ENCODE measurements at regions of chrX and their contacts with region 1.

Region 1: GRCh38 chrX:349196-349595 is 30.6 kb upstream of the GTPBP6 start:
- DNase-seq: peak in 5 of 10 donors; percentile 54 to 73 (median 66)
- H3K4me3 ChIP-seq: peak overlapping the region in 6 of 59 donors; percentile 5 to 33 (median 12)
- H3K27ac ChIP-seq: peak overlapping the region in 9 of 59 donors; percentile 2 to 57 (median 37)
- H3K27me3 ChIP-seq: no peaks in the 10 kb centered on the region
- CTCF ChIP-seq: no peak

Region 2: DNA sequence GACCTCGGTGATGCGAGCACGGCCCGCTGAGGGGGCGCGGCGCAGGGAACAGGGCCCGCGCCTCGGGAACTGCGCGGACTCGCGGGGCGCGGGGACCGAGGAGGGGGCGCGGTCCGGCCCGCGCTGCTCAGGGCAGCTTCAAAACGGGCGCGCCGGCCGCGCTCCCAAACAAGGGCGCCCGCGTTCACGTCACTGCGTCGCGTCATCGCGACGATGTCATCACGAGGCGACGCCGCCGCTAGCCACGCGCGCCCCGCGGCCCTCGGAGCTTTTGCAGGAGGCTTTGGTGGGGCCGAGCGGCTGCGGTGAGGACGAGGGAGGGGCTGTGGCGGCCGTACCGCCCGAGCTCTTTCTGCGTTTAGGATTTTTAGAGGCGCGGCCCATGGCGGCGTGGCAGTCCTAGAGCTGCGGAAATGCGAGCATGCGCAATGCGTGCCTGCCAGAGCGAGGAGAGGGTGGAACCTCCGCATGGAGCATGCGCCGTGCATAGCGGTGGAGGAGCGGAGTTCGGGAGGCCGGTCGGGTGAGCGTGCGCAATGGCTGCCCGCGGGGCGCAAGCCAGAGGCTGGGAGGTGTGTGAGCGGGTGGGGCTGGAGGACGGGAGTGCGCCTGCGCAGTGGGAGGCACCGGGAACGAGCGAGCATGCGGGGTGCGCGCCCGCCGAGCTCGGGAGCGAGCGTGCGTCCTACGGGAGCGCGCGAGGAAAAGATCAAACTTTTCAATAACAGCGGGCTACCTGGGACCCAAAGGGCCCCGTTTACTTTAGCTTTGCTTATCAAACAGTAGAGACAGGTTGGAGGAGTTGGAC is 37.8 kb after region 1 on chrX and contains the start of gene PPP2R3B:
- intact Hi-C with region 1: loop called in 1 of 2 experiments (anchors 2 kb)
- DNase-seq: peak; percentile 91 to 99 (median 98)
- H3K4me3 ChIP-seq: peak within 1 kb of the TSS; percentile 65 to 100 (median 89)
- H3K27ac ChIP-seq: peak within 1 kb of the TSS; percentile 90 to 100 (median 99)
- H3K27me3 ChIP-seq: no peaks in the 10 kb centered on the region
- CTCF ChIP-seq: peak in 14 of 56 donors; percentile 4 to 42 (median 19)
- total RNA-seq, gene PPP2R3B: 5.9 to 41.0 (median 18.3) TPM

Region 3: GRCh38 chrX:437661-438390 is 88.6 kb after region 1 on chrX:
- intact Hi-C with region 1: no loop called
- DNase-seq: peak in 2 of 10 donors; percentile 17 to 24
- H3K4me3 ChIP-seq: no peak overlapping the region
- H3K27ac ChIP-seq: no peak overlapping the region
- H3K27me3 ChIP-seq: peaks cover 0 to 35% (median 4%) of the 10 kb centered on the region in 45 donors
- CTCF ChIP-seq: no peak